Activated B cell treated with CpG ODN at 0.5 μM for 24 hours (primary cell): ENCODE measurements at regions of chr19 and their contacts with region 1.

Region 1: DNA sequence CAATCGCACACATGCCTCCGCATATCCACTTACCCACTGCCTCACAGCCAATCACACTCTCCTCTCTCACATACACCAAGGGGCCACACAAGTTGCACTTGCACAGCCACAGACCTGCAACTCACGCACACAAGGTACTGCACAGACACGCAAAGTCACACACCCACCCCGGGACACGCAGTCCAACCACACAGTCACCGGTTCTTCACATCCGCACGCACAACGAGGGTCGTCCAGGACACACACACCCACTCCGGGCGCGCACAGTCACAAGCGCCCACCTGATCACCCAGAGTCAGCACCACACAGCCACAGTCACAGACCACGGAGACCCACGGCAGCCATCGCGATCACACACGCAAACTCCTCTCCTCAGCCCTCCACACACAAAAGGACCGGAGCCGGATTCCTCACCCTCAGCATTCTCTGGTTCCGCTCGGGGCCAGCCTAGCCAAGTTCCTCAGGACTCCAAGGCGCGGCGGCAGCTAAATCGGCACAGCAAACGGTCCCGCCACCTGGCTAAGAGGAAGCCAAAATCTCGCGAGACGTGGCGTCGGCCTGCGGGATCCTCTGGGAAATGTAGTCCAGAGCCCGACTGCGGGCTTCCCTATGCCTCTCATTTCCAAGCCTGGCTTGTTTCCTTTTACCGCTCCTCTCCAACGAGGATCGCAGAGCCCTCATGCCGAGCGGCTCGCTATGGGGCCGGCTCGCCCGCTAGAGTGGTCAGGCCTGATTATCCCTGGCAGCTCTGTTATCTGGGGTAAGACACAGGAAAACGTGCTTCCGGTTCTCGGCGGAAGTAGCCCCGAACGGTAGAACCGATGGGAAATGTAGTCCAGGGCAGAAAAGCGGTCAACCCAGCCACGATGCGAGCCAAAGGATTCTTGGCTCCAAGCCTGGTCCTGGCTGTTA is at the start of gene ZNF850:
- DNase-seq: peak; percentile 89
- ATAC-seq: peak; percentile 92
- H3K4me3 Mint-ChIP-seq: peak within 1 kb of the TSS; percentile 92
- H3K27ac Mint-ChIP-seq: peak within 1 kb of the TSS; percentile 85
- H3K4me1 Mint-ChIP-seq: peaks cover 24% of the 10 kb centered on the region
- H3K27me3 Mint-ChIP-seq: no peaks in the 10 kb centered on the region
- CTCF ChIP-seq: no peak
- total RNA-seq, gene ZNF850: 5.8 and 7.9 TPM in 2 replicates

Region 2: DNA sequence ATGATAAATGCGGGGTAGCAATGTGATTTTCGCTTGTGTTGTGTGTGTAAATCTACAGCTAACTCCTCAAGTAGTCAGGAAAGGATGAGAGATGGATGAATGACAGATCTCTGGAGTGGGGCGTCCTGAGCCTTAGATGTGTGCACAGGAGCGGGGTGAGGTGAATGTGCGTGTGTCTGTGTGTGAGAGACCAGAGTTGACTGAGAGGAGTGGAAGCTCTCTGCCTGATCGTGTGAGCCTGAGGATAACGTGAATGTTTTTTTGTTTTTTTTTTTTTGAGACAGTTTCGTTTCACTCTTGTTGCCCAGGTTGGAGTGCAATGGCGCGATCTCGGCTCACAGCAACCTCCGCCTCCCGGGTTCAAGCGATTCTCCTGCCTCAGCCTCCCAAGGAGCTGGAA is 106.7 kb before region 1 on chr19:
- CTCF ChIA-PET with region 1: no interaction called
- POLR2A ChIA-PET with region 1: no interaction called
- intact Hi-C with region 1: loop called (anchors 1 kb)
- DNase-seq: no peak
- ATAC-seq: no peak
- H3K4me3 Mint-ChIP-seq: peak overlapping the region; percentile 98
- H3K27ac Mint-ChIP-seq: peak overlapping the region; percentile 72
- H3K4me1 Mint-ChIP-seq: peaks cover 31% of the 10 kb centered on the region
- H3K27me3 Mint-ChIP-seq: no peaks in the 10 kb centered on the region
- CTCF ChIP-seq: no peak

Region 3: GRCh38 chr19:36709423-36709822 is 63.1 kb before region 1 on chr19:
- CTCF ChIA-PET with region 1: no interaction called
- POLR2A ChIA-PET with region 1: no interaction called
- intact Hi-C with region 1: no loop called
- DNase-seq: no peak
- ATAC-seq: no peak
- H3K4me3 Mint-ChIP-seq: no peak overlapping the region
- H3K27ac Mint-ChIP-seq: no peak overlapping the region
- H3K4me1 Mint-ChIP-seq: no peaks in the 10 kb centered on the region
- H3K27me3 Mint-ChIP-seq: no peaks in the 10 kb centered on the region
- CTCF ChIP-seq: no peak

Region 4: DNA sequence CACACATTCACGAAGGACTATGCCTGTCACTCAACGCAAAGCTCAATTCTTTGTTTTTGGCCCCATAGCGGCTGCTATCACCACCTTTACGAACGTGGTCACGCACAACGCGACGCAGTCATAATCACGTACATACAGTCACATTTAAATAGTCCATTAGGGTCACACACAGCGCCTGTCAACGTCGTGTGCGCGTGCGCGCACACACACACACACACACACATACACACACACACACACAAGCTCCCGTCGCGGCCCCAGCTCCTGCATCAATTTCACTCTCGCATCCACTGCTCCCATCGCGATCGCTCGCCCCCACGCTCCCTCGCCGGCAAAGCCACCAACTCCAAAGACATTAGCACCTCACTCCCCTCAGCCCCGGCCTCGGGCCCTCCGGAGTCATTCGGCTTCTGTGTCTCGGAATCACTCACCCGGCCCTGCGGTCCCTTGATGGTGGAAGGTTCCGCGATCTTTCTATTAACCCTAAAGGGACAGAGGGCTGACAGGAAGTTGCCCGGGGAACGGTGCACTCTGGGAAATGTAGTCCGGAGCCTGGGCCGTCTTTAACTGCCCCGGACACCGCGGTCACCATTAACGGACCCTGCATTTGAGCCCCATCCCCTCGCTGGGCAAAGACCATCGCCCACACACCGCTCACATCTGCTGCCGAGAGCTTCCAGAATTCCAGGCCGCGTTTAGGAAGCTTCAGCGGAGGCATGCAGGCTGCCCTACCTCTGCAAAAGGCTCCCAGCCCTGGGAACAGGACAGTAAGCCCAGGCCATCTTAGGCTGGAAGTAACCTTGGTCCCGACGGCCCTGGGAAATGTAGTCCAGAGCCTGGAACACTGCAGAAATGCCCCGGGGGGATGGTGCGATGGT is 65.6 kb after region 1 on chr19 and contains the start of gene ZNF790:
- CTCF ChIA-PET with region 1: no interaction called
- POLR2A ChIA-PET with region 1: interaction called, 6 read pairs
- intact Hi-C with region 1: loop called (anchors 1 kb)
- DNase-seq: peak; percentile 76
- ATAC-seq: peak; percentile 94
- H3K4me3 Mint-ChIP-seq: no peak within 1 kb of the TSS
- H3K27ac Mint-ChIP-seq: no peak within 1 kb of the TSS
- H3K4me1 Mint-ChIP-seq: peaks cover 2% of the 10 kb centered on the region
- H3K27me3 Mint-ChIP-seq: no peaks in the 10 kb centered on the region
- CTCF ChIP-seq: no peak
- total RNA-seq, gene ZNF790: 10.3 and 11.5 TPM in 2 replicates